B cell (primary cell): ENCODE measurements at regions of chr1 and their contacts with region 1.

Region 1: DNA sequence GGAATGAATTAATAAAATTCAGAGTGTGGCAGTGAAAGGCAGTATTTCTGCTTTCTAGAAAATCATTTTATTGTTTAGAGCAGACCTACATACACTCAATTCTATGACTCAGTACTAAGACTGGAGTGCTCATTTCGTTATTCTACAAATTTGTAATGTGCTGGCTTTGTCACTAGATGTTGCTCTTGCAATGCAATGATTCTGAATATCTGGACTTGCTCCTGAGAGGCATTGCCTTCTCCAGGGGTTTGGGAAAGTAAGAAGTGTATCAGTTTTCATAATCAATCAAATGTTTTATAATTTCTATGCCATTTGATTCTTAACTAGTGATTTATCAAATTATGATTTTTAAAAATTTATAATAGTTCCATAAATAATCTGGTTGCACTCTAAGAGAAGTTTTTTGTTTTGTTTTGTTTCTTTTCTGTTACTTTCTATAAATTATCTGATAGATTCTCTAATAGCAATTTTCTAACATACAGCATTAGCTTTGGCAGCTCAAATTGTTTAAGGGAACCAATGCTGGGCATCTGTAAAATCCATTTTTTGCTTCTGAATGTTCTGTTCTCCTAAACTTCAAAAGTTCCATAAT is 280.5 kb upstream of the SGIP1 start:
- DNase-seq: peak; percentile 73
- ATAC-seq: peak; percentile 73
- H3K4me3 ChIP-seq: no peak overlapping the region
- H3K4me3 Mint-ChIP-seq: no peak overlapping the region
- H3K27ac ChIP-seq: no peak overlapping the region
- H3K27ac Mint-ChIP-seq: no peak overlapping the region
- H3K4me1 ChIP-seq: peaks cover 7 to 13% of the 10 kb centered on the region in 2 donors
- H3K4me1 Mint-ChIP-seq: peaks cover 22% of the 10 kb centered on the region
- H3K27me3 ChIP-seq: no peaks in the 10 kb centered on the region
- H3K27me3 Mint-ChIP-seq: no peaks in the 10 kb centered on the region
- CTCF ChIP-seq: peak; percentile 83

Region 2: GRCh38 chr1:65958561-65959350 is 294.7 kb before region 1 on chr1:
- CTCF ChIA-PET with region 1: interaction called, 172 read pairs
- POLR2A ChIA-PET with region 1: no interaction called
- intact Hi-C with region 1: loop called (anchors 1 kb)
- DNase-seq: peak; percentile 69
- ATAC-seq: no peak
- H3K4me3 ChIP-seq: no peak overlapping the region
- H3K4me3 Mint-ChIP-seq: no peak overlapping the region
- H3K27ac ChIP-seq: no peak overlapping the region
- H3K27ac Mint-ChIP-seq: no peak overlapping the region
- H3K4me1 ChIP-seq: no peaks in the 10 kb centered on the region
- H3K4me1 Mint-ChIP-seq: no peaks in the 10 kb centered on the region
- H3K27me3 ChIP-seq: no peaks in the 10 kb centered on the region
- H3K27me3 Mint-ChIP-seq: peaks cover 8% of the 10 kb centered on the region
- CTCF ChIP-seq: peak; percentile 90

Region 3: GRCh38 chr1:66331657-66332547 is 78.5 kb after region 1 on chr1:
- CTCF ChIA-PET with region 1: interaction called, 18 read pairs
- POLR2A ChIA-PET with region 1: interaction called, 5 read pairs
- intact Hi-C with region 1: loop called (anchors 1 kb)
- DNase-seq: peak; percentile 62
- ATAC-seq: peak; percentile 3
- H3K4me3 ChIP-seq: peak overlapping the region; percentile 69 to 100 (median 90)
- H3K4me3 Mint-ChIP-seq: peak overlapping the region; percentile 99
- H3K27ac ChIP-seq: peak overlapping the region; percentile 94 to 98
- H3K27ac Mint-ChIP-seq: peak overlapping the region; percentile 97
- H3K4me1 ChIP-seq: peaks cover 45 to 58% of the 10 kb centered on the region in 2 donors
- H3K4me1 Mint-ChIP-seq: peaks cover 56% of the 10 kb centered on the region
- H3K27me3 ChIP-seq: no peaks in the 10 kb centered on the region
- H3K27me3 Mint-ChIP-seq: no peaks in the 10 kb centered on the region
- CTCF ChIP-seq: no peak

Region 4: DNA sequence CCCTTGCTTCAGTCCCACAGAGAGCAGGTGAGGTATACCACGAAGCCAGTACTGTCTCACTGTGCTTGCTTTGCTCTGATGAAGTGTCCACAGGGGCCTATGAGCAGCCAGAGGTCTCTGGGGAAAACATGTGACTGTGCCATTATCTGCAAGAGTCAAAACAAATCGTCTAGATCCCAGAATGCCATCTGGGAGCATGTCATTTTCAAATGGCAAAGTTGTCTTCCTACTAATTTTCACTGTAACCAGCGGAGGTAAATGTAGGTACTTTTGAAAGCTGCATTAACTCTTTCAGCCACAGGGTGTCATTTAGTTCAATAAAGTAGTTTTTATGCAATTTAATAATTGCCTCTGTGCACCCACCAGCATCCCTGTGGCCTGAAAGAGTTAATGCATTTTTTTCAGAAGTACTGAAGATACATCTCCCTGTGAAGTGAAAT is 106.9 kb after region 1 on chr1:
- CTCF ChIA-PET with region 1: interaction called, 12 read pairs
- POLR2A ChIA-PET with region 1: no interaction called
- intact Hi-C with region 1: loop called (anchors 1 kb)
- DNase-seq: peak; percentile 38
- ATAC-seq: peak; percentile 61
- H3K4me3 ChIP-seq: no peak overlapping the region
- H3K4me3 Mint-ChIP-seq: peak overlapping the region; percentile 78
- H3K27ac ChIP-seq: peak overlapping the region in 1 of 2 donors; percentile 78
- H3K27ac Mint-ChIP-seq: peak overlapping the region; percentile 82
- H3K4me1 ChIP-seq: peaks cover 34 to 35% of the 10 kb centered on the region in 2 donors
- H3K4me1 Mint-ChIP-seq: peaks cover 84% of the 10 kb centered on the region
- H3K27me3 ChIP-seq: no peaks in the 10 kb centered on the region
- H3K27me3 Mint-ChIP-seq: no peaks in the 10 kb centered on the region
- CTCF ChIP-seq: peak; percentile 56

Region 5: DNA sequence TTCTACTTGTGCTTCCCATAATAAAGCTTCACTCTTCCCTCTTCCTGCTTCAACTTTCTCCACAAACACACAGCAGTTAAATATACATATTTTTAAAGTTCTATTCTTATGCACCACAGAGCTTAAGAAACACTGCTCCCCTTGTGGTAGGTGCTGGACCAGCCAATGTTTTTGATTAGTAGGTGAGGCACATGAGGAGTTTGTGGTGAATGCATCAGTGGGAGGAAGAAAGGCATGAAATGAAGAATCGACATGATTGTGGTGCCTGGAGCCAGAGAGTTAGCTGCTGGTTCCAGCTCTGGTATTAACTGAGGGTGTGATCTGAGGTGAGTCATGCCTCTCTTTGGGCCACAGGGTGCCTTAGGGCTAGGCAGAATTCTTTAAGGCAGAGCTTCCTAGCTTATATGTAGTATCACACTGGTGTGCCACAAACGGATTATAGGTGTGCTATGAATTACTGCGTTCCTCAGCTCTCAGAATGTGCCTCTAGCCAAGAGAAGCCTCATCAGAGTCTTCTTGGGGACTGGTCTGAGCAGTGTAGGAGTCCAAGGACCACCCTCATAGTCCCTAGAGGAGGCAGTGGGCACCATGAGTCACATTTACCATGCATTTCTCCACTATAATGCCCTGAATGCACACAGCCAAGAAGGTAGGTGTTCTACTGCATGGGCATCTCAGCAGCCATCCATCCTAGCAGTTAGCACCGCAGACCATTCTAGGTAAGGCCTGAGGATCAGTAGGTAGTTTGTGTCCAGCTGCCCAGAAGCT is 183.1 kb after region 1 on chr1:
- CTCF ChIA-PET with region 1: interaction called, 19 read pairs
- POLR2A ChIA-PET with region 1: no interaction called
- intact Hi-C with region 1: no loop called
- DNase-seq: peak; percentile 52
- ATAC-seq: peak; percentile 65
- H3K4me3 ChIP-seq: no peak overlapping the region
- H3K4me3 Mint-ChIP-seq: no peak overlapping the region
- H3K27ac ChIP-seq: no peak overlapping the region
- H3K27ac Mint-ChIP-seq: peak overlapping the region; percentile 32
- H3K4me1 ChIP-seq: peaks cover 20 to 21% of the 10 kb centered on the region in 2 donors
- H3K4me1 Mint-ChIP-seq: peaks cover 34% of the 10 kb centered on the region
- H3K27me3 ChIP-seq: no peaks in the 10 kb centered on the region
- H3K27me3 Mint-ChIP-seq: no peaks in the 10 kb centered on the region
- CTCF ChIP-seq: peak; percentile 16

Region 6: GRCh38 chr1:66725885-66726665 is 472.6 kb after region 1 on chr1:
- CTCF ChIA-PET with region 1: interaction called, 3 read pairs
- POLR2A ChIA-PET with region 1: no interaction called
- intact Hi-C with region 1: loop called (anchors 5 kb)
- DNase-seq: peak; percentile 69
- ATAC-seq: no peak
- H3K4me3 ChIP-seq: no peak overlapping the region
- H3K4me3 Mint-ChIP-seq: no peak overlapping the region
- H3K27ac ChIP-seq: no peak overlapping the region
- H3K27ac Mint-ChIP-seq: no peak overlapping the region
- H3K4me1 ChIP-seq: no peaks in the 10 kb centered on the region
- H3K4me1 Mint-ChIP-seq: peaks cover 8% of the 10 kb centered on the region
- H3K27me3 ChIP-seq: no peaks in the 10 kb centered on the region
- H3K27me3 Mint-ChIP-seq: peaks cover 53% of the 10 kb centered on the region
- CTCF ChIP-seq: peak; percentile 93